ENCODE measurements at regions of chr7 and their contacts with region 1.

Region 1: GRCh38 chr7:26200444-26201246 is at the start of gene HNRNPA2B1:
- DNase-seq: peak; percentile 98
- ATAC-seq: peak; percentile 71
- H3K4me3 ChIP-seq: peak within 1 kb of the TSS; percentile 99
- H3K27ac ChIP-seq: peak within 1 kb of the TSS; percentile 99
- H3K4me1 ChIP-seq: peaks cover 43% of the 10 kb centered on the region
- H3K27me3 ChIP-seq: no peaks in the 10 kb centered on the region; a peak in 1 of 5 replicates
- CTCF ChIP-seq: peak; percentile 12; the same call in 1 of the 2 replicates
- EP300 ChIP-seq: no peak; a peak in 1 of 4 replicates
- POLR2A ChIP-seq: peak; percentile 99 to 100
- RAD21 ChIP-seq: peak; percentile 33; the same call in 1 of the 2 replicates
- total RNA-seq, gene HNRNPA2B1: 412 and 636 TPM in 2 replicates

Region 2: GRCh38 chr7:26090927-26091519 is 109.6 kb before region 1 on chr7:
- CTCF ChIA-PET with region 1: no interaction called
- POLR2A ChIA-PET with region 1: no interaction called
- in situ Hi-C with region 1: no loop called
- intact Hi-C with region 1: loop called (anchors 5 kb)
- DNase-seq: peak; percentile 54
- ATAC-seq: peak; percentile 70
- H3K4me3 ChIP-seq: no peak overlapping the region
- H3K27ac ChIP-seq: no peak overlapping the region
- H3K4me1 ChIP-seq: peaks cover 15% of the 10 kb centered on the region
- H3K27me3 ChIP-seq: 0 out of 5 replicates have a peak, but pooled peaks cover 0 to 3% of the 10 kb centered on the region in 2 experiments
- CTCF ChIP-seq: peak; percentile 72
- EP300 ChIP-seq: no peak
- POLR2A ChIP-seq: no peak
- RAD21 ChIP-seq: peak; percentile 30; the same call in 1 of the 2 replicates

Region 3: GRCh38 chr7:26187380-26188205 is 13.1 kb before region 1 on chr7:
- CTCF ChIA-PET with region 1: no interaction called
- POLR2A ChIA-PET with region 1: interaction called, 40 read pairs
- in situ Hi-C with region 1: no loop called
- intact Hi-C with region 1: no loop called
- DNase-seq: no peak
- ATAC-seq: peak; percentile 2
- H3K4me3 ChIP-seq: no peak overlapping the region
- H3K27ac ChIP-seq: no peak overlapping the region
- H3K4me1 ChIP-seq: peaks cover 20% of the 10 kb centered on the region
- H3K27me3 ChIP-seq: no peaks in the 10 kb centered on the region
- CTCF ChIP-seq: no peak
- EP300 ChIP-seq: no peak
- POLR2A ChIP-seq: peak; percentile 50 to 76
- RAD21 ChIP-seq: no peak; the same call in 1 of the 2 replicates

Region 4: DNA sequence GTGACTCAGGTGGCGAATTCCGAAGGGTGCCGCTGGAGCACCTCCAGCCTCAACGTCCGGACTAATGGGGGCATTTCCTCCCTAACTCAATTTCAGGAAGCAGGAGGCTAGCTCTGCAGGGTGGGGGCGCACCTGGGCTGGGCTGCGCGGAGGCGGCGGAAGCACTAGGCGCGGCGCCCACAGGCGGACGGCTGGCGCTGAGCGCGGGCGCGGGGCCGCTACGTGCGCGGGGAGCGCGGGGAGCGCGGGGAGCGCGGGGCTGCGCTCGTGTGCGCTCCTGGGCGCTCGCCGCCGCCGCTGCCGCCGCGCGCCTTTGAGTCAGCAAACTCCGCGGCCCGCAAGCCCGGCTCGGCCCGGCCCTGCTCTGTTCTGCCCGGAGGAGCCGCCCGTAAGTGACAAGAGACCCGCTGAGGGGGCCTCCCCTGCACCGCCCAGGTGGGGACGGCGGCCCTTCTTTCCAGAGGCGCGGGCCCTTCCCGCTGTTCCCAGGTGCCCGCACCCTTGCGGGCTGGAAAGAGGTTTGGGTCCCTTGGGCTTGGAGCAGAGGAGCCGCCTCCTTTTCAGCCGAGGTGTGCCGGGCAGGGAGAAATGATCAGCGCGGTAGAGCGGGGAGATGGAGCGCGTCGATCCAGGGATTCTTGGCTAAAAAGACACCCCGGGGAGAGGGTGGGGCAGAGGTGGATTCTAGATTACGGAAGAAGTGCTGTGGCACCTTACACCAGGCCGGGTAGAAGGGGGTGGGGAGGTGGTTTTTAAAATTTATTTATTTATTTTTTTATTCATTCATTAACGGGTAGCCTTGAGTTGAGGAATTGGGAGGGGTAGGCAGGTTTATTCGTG is 91.3 kb after region 1 on chr7 and contains the start of gene SNX10:
- CTCF ChIA-PET with region 1: no interaction called
- POLR2A ChIA-PET with region 1: interaction called, 3 read pairs
- in situ Hi-C with region 1: no loop called
- intact Hi-C with region 1: loop called (anchors 5 kb)
- DNase-seq: peak; percentile 59
- ATAC-seq: peak; percentile 95
- H3K4me3 ChIP-seq: peak within 1 kb of the TSS; percentile 90 to 96 (median 94)
- H3K27ac ChIP-seq: peak within 1 kb of the TSS; percentile 77
- H3K4me1 ChIP-seq: peaks cover 26% of the 10 kb centered on the region
- H3K27me3 ChIP-seq: peaks cover 0 to 3% of the 10 kb centered on the region in 2 experiments; a peak in 2 of 5 replicates
- CTCF ChIP-seq: peak; percentile 86
- EP300 ChIP-seq: no peak
- POLR2A ChIP-seq: no peak; a peak in 1 of 4 replicates
- RAD21 ChIP-seq: peak; percentile 79
- total RNA-seq, gene SNX10: 26.0 and 43.1 TPM in 2 replicates

Region 5: GRCh38 chr7:26346611-26347203 is 146.1 kb after region 1 on chr7:
- CTCF ChIA-PET with region 1: no interaction called
- POLR2A ChIA-PET with region 1: interaction called, 16 read pairs
- in situ Hi-C with region 1: no loop called
- intact Hi-C with region 1: loop called (anchors 5 kb)
- DNase-seq: no peak
- ATAC-seq: no peak
- H3K4me3 ChIP-seq: no peak overlapping the region
- H3K27ac ChIP-seq: peak overlapping the region; percentile 27
- H3K4me1 ChIP-seq: peaks cover 71% of the 10 kb centered on the region
- H3K27me3 ChIP-seq: no peaks in the 10 kb centered on the region; a peak in 1 of 5 replicates
- CTCF ChIP-seq: no peak
- EP300 ChIP-seq: no peak
- POLR2A ChIP-seq: no peak
- RAD21 ChIP-seq: no peak

Measured in HepG2 (cell line).